Spleen (tissue), 13 donors: ENCODE measurements at regions of chr18 and their contacts with region 1.

Region 1: DNA sequence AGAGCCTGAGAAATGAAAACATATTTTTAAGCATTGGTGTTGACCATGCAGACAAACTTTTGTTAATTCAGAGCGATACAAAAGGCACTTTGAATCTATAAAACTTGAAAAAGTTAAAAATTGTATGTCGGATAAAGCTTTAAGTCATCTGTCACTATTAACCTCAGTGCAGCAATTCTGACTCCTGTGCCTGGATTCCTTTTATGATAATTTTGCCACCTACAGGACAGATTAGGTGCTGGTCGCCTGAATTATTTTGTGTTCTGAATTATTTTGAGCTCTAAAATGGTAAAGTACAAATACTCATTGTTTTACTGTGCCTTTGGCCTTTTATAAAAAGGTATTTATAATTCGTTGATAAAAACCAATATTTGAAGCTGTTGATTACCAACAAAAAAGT is 19.4 kb upstream of the RNF138 start:
- DNase-seq: no peak
- H3K4me3 ChIP-seq: no peak overlapping the region
- H3K27ac ChIP-seq: no peak overlapping the region
- H3K4me1 ChIP-seq: peaks cover 0 to 10% (median 0%) of the 10 kb centered on the region in 6 donors
- H3K27me3 ChIP-seq: no peaks in the 10 kb centered on the region
- CTCF ChIP-seq: peak; percentile 16 to 54 (median 44)
- POLR2A ChIP-seq: no peak

Region 2: GRCh38 chr18:31942999-31943865 is 129.1 kb before region 1 on chr18 and contains the start of gene TRAPPC8:
- intact Hi-C with region 1: loop called (anchors 10 kb)
- DNase-seq: peak; percentile 100
- H3K4me3 ChIP-seq: peak within 1 kb of the TSS; percentile 86 to 97 (median 92)
- H3K27ac ChIP-seq: peak within 1 kb of the TSS; percentile 90 to 98 (median 94)
- H3K4me1 ChIP-seq: peaks cover 31 to 58% (median 46%) of the 10 kb centered on the region in 6 donors
- H3K27me3 ChIP-seq: no peaks in the 10 kb centered on the region
- CTCF ChIP-seq: peak in 3 of 11 experiments; percentile 15 to 29 (median 18)
- POLR2A ChIP-seq: peak in 2 of 3 donors; percentile 50 to 71
- total RNA-seq, gene TRAPPC8: 46.4 to 64.5 (median 53.3) TPM

Region 3: DNA sequence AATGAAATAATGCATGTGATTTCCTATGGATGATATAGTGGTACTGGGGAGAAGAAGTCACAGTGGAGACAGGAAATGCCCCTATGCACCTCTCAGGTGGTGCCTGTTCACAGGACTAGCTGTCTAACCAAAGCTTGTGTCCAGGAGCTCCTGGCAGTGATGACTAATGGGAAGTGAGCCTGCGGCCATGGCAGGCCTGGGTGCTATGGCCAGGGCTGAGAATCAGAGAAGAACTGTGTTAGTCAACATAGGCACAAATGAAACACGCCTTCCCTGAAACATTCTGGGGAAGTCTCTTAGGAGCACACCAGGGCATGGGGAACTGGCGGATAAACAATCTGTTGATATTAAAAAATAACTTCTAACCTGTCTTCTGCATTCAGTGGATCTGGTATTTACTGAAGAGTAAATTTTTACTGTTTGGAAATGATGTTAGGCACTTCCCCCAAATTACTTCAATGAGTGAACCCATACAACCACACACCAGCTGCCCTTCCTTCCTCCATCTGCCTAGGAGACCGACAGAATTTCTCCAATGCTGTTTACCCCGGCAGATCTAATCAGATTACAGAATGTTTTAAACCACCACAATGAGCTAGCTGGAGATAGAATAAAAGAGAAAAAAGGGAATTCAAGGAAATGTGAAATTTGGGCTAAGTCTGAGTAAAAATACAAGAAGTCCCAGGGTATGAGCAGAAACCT is 184.9 kb after region 1 on chr18:
- intact Hi-C with region 1: no loop called
- DNase-seq: no peak
- H3K4me3 ChIP-seq: no peak overlapping the region
- H3K27ac ChIP-seq: no peak overlapping the region
- H3K4me1 ChIP-seq: peaks cover 0 to 4% (median 0%) of the 10 kb centered on the region in 6 donors
- H3K27me3 ChIP-seq: peaks cover 0 to 13% (median 0%) of the 10 kb centered on the region in 7 donors
- CTCF ChIP-seq: no peak
- POLR2A ChIP-seq: no peak